T-cell (primary cell): ENCODE measurements at regions of chr6 and their contacts with region 1.

Region 1: GRCh38 chr6:111478749-111479148 is 4.3 kb downstream of the REV3L start:
- DNase-seq: peak in 1 of 35 experiments; percentile 63
- ATAC-seq: peak in 2 of 4 experiments; percentile 9 to 20
- H3K4me3 ChIP-seq: no peak overlapping the region
- H3K4me3 Mint-ChIP-seq: no peak overlapping the region
- H3K27ac ChIP-seq: no peak overlapping the region
- H3K27ac Mint-ChIP-seq: peak overlapping the region in 1 of 2 donors; percentile 69
- H3K4me1 ChIP-seq: peaks cover 5 to 8% of the 10 kb centered on the region in 2 experiments
- H3K4me1 Mint-ChIP-seq: peaks cover 39 to 48% (median 44%) of the 10 kb centered on the region in 3 donors
- H3K27me3 ChIP-seq: no peaks in the 10 kb centered on the region
- H3K27me3 Mint-ChIP-seq: no peaks in the 10 kb centered on the region

Region 2: GRCh38 chr6:111068510-111069205 is 410.1 kb before region 1 on chr6:
- CTCF ChIA-PET with region 1: no interaction called
- POLR2A ChIA-PET with region 1: no interaction called
- DNase-seq: no peak
- ATAC-seq: no peak
- H3K4me3 ChIP-seq: no peak overlapping the region
- H3K4me3 Mint-ChIP-seq: no peak overlapping the region
- H3K27ac ChIP-seq: no peak overlapping the region
- H3K27ac Mint-ChIP-seq: no peak overlapping the region
- H3K4me1 ChIP-seq: no peaks in the 10 kb centered on the region
- H3K4me1 Mint-ChIP-seq: peaks cover 0 to 8% (median 0%) of the 10 kb centered on the region in 3 donors
- H3K27me3 ChIP-seq: no peaks in the 10 kb centered on the region
- H3K27me3 Mint-ChIP-seq: peaks cover 4 to 11% of the 10 kb centered on the region in 2 donors

Region 3: DNA sequence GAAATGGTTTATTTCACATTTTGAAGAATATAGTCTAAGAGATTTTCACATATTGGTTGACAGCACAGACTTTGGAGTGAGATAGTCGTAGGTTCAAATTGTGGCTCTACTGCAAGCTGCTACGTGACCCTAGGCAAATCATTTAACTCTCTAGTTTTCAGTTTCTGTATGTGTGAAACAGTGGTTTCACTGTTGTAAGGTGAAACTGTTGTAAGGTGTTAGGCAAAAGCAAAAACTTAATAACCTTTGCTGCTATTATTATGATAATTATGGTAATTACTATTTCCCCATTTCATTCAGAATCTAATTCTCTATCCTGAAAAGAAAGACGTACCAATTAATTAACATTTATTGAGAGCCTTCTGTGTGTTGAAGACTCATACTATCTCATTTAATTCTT is 139.9 kb before region 1 on chr6:
- CTCF ChIA-PET with region 1: no interaction called
- POLR2A ChIA-PET with region 1: no interaction called
- DNase-seq: no peak
- ATAC-seq: no peak
- H3K4me3 ChIP-seq: no peak overlapping the region
- H3K4me3 Mint-ChIP-seq: no peak overlapping the region
- H3K27ac ChIP-seq: no peak overlapping the region
- H3K27ac Mint-ChIP-seq: no peak overlapping the region
- H3K4me1 ChIP-seq: no peaks in the 10 kb centered on the region
- H3K4me1 Mint-ChIP-seq: no peaks in the 10 kb centered on the region
- H3K27me3 ChIP-seq: no peaks in the 10 kb centered on the region
- H3K27me3 Mint-ChIP-seq: no peaks in the 10 kb centered on the region

Region 4: DNA sequence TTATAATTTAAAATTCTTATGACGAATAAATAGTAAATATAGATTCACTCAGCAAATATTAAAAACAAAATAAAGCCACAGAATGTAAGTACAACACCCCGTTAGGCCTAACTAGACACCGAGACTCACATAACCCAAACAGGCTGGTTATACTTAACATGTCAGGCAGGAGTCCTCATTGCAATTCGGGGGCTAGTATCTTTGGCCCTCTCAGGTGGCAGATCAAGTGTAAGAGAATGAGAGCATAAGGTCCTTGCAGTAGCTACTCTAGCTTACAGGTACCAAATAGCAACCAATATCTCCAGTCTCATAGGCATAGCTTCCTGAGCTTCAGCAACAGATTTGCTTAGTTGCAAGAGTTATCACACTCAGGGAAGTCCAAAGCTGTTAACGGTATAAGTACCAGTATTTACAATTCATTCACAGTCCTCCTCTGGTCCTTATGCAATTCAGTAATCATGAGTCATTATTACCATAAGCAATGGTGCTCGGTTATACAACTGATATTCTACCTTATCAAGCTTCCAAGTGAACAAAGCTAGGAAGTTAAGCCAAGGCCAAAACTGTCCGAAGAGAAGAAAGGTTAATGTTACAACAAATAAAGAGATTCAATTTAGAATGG is 15.9 kb before region 1 on chr6:
- CTCF ChIA-PET with region 1: interaction called, 9 to 10 read pairs
- POLR2A ChIA-PET with region 1: interaction called, 4 to 9 read pairs
- DNase-seq: no peak
- ATAC-seq: no peak
- H3K4me3 ChIP-seq: no peak overlapping the region
- H3K4me3 Mint-ChIP-seq: no peak overlapping the region
- H3K27ac ChIP-seq: no peak overlapping the region
- H3K27ac Mint-ChIP-seq: peak overlapping the region in 1 of 2 donors; percentile 45
- H3K4me1 ChIP-seq: peaks cover 2 to 7% of the 10 kb centered on the region in 2 experiments
- H3K4me1 Mint-ChIP-seq: peaks cover 33 to 41% (median 41%) of the 10 kb centered on the region in 3 donors
- H3K27me3 ChIP-seq: no peaks in the 10 kb centered on the region
- H3K27me3 Mint-ChIP-seq: no peaks in the 10 kb centered on the region